ENCODE measurements at regions of chr15 and their contacts with region 1.

Region 1: DNA sequence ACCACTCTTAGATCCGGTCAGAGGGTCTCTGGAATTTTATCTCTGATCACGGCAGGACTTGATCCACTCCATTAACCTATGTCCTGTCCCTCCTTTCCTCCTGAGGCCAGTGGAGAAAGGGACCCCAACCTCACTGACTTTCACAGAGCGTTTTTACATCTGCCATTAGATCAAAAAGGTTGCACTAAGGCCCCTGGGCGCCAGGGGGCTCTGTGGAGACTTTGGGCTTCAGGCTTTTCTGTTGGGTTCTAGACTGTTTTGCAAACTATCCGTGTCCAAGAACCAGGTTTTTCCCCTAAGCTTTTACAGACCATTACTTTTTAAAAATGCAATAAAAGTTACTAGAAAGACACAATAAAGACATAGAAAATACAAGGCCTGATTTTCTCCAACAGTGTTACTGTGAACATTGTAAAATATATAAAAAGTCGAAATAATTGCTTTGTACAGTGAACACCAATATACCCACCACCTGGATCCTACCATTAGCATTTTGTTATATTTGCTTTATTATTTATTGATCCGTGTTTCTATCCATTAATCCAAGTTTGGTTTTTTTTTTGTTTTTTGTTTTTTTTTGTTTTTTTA is 159.7 kb downstream of the POLR2M start:
- DNase-seq: peak; percentile 44
- H3K4me3 ChIP-seq: no peak overlapping the region
- H3K27ac ChIP-seq: no peak overlapping the region
- H3K4me1 ChIP-seq: no peaks in the 10 kb centered on the region
- CTCF ChIP-seq: peak; percentile 89

Region 2: DNA sequence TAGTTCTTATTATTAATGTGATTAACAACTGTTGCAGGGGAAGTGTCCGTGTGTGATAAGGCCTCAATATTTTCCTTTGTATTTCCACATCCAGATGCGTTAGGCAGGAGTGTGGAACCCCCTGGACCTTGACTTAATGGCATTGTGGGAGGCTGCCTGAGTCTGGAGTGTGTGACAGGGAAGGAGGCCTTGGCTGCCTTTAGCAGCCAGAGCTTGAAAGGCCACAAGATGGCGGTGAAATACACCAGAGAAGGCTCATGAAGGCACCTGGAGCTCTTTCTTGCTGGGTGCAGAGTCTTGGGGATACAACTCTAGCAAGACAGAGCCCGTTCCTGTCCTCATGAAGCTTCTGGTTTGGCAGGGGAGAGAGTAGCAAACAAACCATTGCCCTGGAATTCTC is 122.8 kb before region 1 on chr15:
- CTCF ChIA-PET with region 1: no interaction called
- POLR2A ChIA-PET with region 1: no interaction called
- intact Hi-C with region 1: loop called (anchors 10 kb)
- DNase-seq: peak; percentile 4
- H3K4me3 ChIP-seq: no peak overlapping the region
- H3K27ac ChIP-seq: no peak overlapping the region
- H3K4me1 ChIP-seq: no peaks in the 10 kb centered on the region
- CTCF ChIP-seq: 0 out of 2 replicates have a peak, but pooled peaks have one; percentile 21

Measured in OCI-LY7 (cell line).